GM10248 (cell line): ENCODE measurements at regions of chr3 and their contacts with region 1.

Region 1: GRCh38 chr3:65138556-65138955 is 450.8 kb upstream of the ADAMTS9 start:
- DNase-seq: no peak
- CTCF ChIP-seq: no peak

Region 2: GRCh38 chr3:65126527-65127410 is 11.8 kb before region 1 on chr3:
- CTCF ChIA-PET with region 1: interaction called, 10 read pairs
- POLR2A ChIA-PET with region 1: no interaction called
- DNase-seq: no peak
- CTCF ChIP-seq: no peak

Region 3: GRCh38 chr3:65148687-65149086 is 10.1 kb after region 1 on chr3:
- CTCF ChIA-PET with region 1: no interaction called
- POLR2A ChIA-PET with region 1: no interaction called
- DNase-seq: no peak
- CTCF ChIP-seq: no peak